CD4-positive, alpha-beta memory T cell (primary cell): ENCODE measurements at regions of chr9 and their contacts with region 1.

Region 1: GRCh38 chr9:5437254-5438216 is at the start of gene PLGRKT:
- DNase-seq: peak; percentile 89 to 95 (median 91)
- H3K4me3 ChIP-seq: peak within 1 kb of the TSS; percentile 71 to 83
- H3K4me3 Mint-ChIP-seq: peak within 1 kb of the TSS; percentile 91 to 98 (median 94)
- H3K27ac ChIP-seq: peak within 1 kb of the TSS; percentile 92
- H3K27ac Mint-ChIP-seq: peak within 1 kb of the TSS; percentile 99 to 100 (median 99)
- H3K4me1 ChIP-seq: peaks cover 23% of the 10 kb centered on the region
- H3K4me1 Mint-ChIP-seq: peaks cover 25 to 46% (median 36%) of the 10 kb centered on the region in 4 donors
- H3K27me3 ChIP-seq: no peaks in the 10 kb centered on the region
- H3K27me3 Mint-ChIP-seq: no peaks in the 10 kb centered on the region
- total RNA-seq, gene PLGRKT: 20.0 to 21.7 TPM

Region 2: DNA sequence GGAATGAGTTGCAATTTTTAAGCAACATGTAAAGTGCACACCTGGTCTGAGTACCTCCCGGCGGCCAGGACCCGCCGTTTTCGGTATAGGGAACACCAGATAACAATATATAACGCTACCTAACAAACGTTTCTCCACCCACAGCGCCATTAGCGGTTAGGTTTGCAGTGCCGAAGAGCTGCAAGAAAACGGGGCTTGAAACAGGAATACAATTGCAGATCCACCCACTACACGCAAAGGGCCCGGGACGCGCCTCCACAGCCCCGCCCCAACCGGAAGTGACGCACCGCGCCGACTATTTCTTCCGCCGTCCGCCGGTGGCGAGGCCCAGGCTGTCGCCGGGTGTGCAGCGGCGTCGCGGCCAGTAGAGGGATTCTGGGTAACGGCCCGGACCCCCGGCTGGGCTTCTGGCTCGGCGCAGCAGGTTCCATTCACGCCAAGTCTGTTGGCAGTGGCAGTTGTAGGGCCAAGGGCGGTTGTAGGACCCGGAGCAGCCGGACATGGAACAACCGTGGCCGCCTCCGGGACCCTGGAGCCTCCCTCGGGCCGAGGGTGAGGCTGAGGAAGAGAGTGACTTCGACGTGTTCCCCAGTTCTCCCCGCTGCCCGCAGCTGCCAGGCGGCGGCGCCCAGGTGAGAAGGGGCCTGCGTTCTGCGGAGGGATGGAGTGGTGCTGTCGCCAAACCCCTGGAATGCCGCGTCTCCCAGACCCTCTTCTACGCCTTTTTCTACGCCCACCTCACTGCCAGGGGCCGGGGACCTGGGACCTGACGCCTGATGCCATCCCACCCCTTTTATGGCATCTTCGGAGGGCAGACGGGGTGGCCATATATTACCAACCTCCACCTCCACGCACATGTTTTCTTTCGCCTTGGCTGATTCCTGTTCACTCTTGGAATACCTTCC is 758.0 kb before region 1 on chr9 and contains the start of gene CDC37L1:
- CTCF ChIA-PET with region 1: no interaction called
- POLR2A ChIA-PET with region 1: interaction called, 4 read pairs
- intact Hi-C with region 1: loop called (anchors 5 kb)
- DNase-seq: peak; percentile 97 to 99 (median 99)
- H3K4me3 ChIP-seq: peak within 1 kb of the TSS; percentile 72 to 80
- H3K4me3 Mint-ChIP-seq: no peak within 1 kb of the TSS
- H3K27ac ChIP-seq: peak within 1 kb of the TSS; percentile 94
- H3K27ac Mint-ChIP-seq: no peak within 1 kb of the TSS
- H3K4me1 ChIP-seq: peaks cover 36% of the 10 kb centered on the region
- H3K4me1 Mint-ChIP-seq: peaks cover 11 to 16% (median 11%) of the 10 kb centered on the region in 4 donors
- H3K27me3 ChIP-seq: no peaks in the 10 kb centered on the region
- H3K27me3 Mint-ChIP-seq: no peaks in the 10 kb centered on the region
- total RNA-seq, gene CDC37L1: 27.2 to 27.8 TPM

Region 3: GRCh38 chr9:4762108-4762885 is 675.2 kb before region 1 on chr9:
- CTCF ChIA-PET with region 1: interaction called, 3 read pairs
- POLR2A ChIA-PET with region 1: no interaction called
- intact Hi-C with region 1: loop called (anchors 2 kb)
- DNase-seq: peak; percentile 75 to 79 (median 77)
- H3K4me3 ChIP-seq: no peak overlapping the region
- H3K4me3 Mint-ChIP-seq: peak overlapping the region in 6 of 8 donors; percentile 17 to 54 (median 42)
- H3K27ac ChIP-seq: no peak overlapping the region
- H3K27ac Mint-ChIP-seq: peak overlapping the region in 2 of 7 donors; percentile 28 to 71
- H3K4me1 ChIP-seq: peaks cover 11% of the 10 kb centered on the region
- H3K4me1 Mint-ChIP-seq: peaks cover 5 to 12% (median 6%) of the 10 kb centered on the region in 4 donors
- H3K27me3 ChIP-seq: peaks cover 4% of the 10 kb centered on the region
- H3K27me3 Mint-ChIP-seq: peaks cover 0 to 4% of the 10 kb centered on the region in 2 donors

Region 4: DNA sequence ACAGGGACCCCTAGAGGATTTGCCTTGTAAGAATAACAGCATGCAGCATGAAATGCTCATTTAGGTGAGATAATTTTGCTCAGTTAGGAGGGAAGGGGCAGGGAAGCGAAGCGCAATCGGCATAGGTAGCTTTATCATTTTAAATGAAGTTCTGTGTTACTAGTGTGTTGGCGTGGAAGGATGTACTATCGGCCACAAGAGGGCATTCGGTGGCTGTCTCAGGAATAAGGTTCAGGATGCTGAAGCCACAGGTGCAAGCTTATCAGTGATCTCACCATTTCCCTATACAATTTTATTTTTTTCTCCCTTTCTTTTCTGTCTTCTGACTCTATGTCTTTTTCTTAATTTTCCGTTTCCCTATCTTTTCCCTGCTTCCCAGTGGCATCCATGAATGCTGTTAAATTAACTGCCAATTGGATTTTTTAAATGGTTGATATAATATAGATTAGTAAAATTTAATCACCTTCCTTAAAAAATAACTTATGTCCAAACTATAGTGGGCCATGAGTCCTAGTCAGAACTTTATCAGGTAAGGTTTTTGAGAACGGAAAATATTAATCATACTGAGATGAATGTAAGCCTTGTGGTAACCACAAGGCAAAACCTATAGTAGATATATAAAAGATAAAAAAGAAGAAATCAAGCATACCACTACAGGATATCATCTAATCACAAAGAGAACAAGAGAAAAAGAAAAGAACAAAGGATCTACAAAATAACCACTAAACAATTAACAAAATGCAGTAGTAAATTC is 250.9 kb before region 1 on chr9:
- CTCF ChIA-PET with region 1: interaction called, 107 read pairs
- POLR2A ChIA-PET with region 1: interaction called, 11 read pairs
- intact Hi-C with region 1: loop called (anchors 5 kb)
- DNase-seq: peak; percentile 67 to 72 (median 71)
- H3K4me3 ChIP-seq: no peak overlapping the region
- H3K4me3 Mint-ChIP-seq: peak overlapping the region in 2 of 8 donors; percentile 3 to 48
- H3K27ac ChIP-seq: no peak overlapping the region
- H3K27ac Mint-ChIP-seq: peak overlapping the region in 5 of 7 donors; percentile 8 to 54 (median 10)
- H3K4me1 ChIP-seq: peaks cover 10% of the 10 kb centered on the region
- H3K4me1 Mint-ChIP-seq: peaks cover 4 to 13% (median 11%) of the 10 kb centered on the region in 4 donors
- H3K27me3 ChIP-seq: no peaks in the 10 kb centered on the region
- H3K27me3 Mint-ChIP-seq: no peaks in the 10 kb centered on the region

Region 5: DNA sequence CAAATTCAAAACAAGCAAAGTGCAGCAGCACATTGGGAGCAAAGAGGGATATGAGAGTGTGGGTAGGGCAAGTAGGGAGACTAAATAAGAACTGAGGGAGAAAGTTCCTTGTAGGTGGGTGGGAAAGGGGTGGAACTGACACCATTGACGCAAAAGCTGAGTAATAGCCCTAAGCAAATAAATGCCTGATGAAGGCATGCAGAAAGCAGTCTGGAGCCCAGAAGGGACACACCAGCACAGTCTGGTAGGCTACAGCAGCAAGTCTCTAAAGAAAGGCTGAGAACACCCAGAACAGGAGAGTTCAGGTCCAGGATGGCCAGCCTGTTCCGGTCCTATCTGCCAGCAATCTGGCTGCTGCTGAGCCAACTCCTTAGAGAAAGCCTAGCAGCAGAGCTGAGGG is 206.3 kb before region 1 on chr9 and contains the start of gene INSL4:
- CTCF ChIA-PET with region 1: no interaction called
- POLR2A ChIA-PET with region 1: no interaction called
- intact Hi-C with region 1: no loop called
- DNase-seq: no peak
- H3K4me3 ChIP-seq: no peak within 1 kb of the TSS
- H3K4me3 Mint-ChIP-seq: no peak within 1 kb of the TSS
- H3K27ac ChIP-seq: no peak within 1 kb of the TSS
- H3K27ac Mint-ChIP-seq: no peak within 1 kb of the TSS
- H3K4me1 ChIP-seq: no peaks in the 10 kb centered on the region
- H3K4me1 Mint-ChIP-seq: no peaks in the 10 kb centered on the region
- H3K27me3 ChIP-seq: no peaks in the 10 kb centered on the region
- H3K27me3 Mint-ChIP-seq: peaks cover 4 to 9% of the 10 kb centered on the region in 2 donors
- total RNA-seq, gene INSL4: not detected

Region 6: GRCh38 chr9:5268890-5269715 is 168.4 kb before region 1 on chr9:
- CTCF ChIA-PET with region 1: no interaction called
- POLR2A ChIA-PET with region 1: no interaction called
- intact Hi-C with region 1: no loop called
- DNase-seq: no peak
- H3K4me3 ChIP-seq: no peak overlapping the region
- H3K4me3 Mint-ChIP-seq: no peak overlapping the region
- H3K27ac ChIP-seq: no peak overlapping the region
- H3K27ac Mint-ChIP-seq: no peak overlapping the region
- H3K4me1 ChIP-seq: no peaks in the 10 kb centered on the region
- H3K4me1 Mint-ChIP-seq: peaks cover 7 to 9% (median 9%) of the 10 kb centered on the region in 4 donors
- H3K27me3 ChIP-seq: no peaks in the 10 kb centered on the region
- H3K27me3 Mint-ChIP-seq: peaks cover 2% of the 10 kb centered on the region in 2 donors

Region 7: DNA sequence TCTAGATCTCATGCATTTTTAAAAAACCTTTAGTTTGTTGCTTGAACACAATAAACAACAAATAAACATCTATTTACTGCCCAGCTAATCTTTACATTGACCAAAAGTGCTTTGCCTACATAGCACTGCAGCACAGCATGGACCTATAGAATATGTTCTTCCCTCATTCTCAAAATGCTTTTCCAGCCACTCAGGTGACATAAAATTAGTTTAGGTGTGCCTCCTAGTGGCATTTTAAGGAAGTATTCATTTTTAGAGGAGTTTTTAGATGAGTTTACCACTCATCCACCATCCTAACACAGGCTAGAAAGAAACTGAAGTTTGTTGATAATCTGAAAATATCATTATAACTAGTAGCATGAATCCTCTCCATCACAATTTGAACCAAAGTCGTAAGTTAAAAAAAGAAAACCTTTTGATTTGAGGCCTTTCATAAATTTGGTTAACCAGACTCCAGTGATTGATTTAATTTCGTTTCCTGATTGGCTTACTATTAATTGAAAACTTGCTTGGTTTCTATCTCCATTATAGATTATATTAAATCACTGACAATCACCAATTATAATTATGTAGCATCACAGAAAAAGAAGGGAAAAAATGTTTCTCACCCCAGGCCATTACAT is 12.4 kb before region 1 on chr9:
- CTCF ChIA-PET with region 1: interaction called, 10 read pairs
- POLR2A ChIA-PET with region 1: interaction called, 3 read pairs
- intact Hi-C with region 1: loop called (anchors 1 kb)
- DNase-seq: peak in 4 of 5 donors; percentile 48 to 53 (median 50)
- H3K4me3 ChIP-seq: no peak overlapping the region
- H3K4me3 Mint-ChIP-seq: no peak overlapping the region
- H3K27ac ChIP-seq: no peak overlapping the region
- H3K27ac Mint-ChIP-seq: peak overlapping the region in 1 of 7 donors; percentile 56
- H3K4me1 ChIP-seq: no peaks in the 10 kb centered on the region
- H3K4me1 Mint-ChIP-seq: peaks cover 3 to 12% (median 6%) of the 10 kb centered on the region in 4 donors
- H3K27me3 ChIP-seq: no peaks in the 10 kb centered on the region
- H3K27me3 Mint-ChIP-seq: no peaks in the 10 kb centered on the region

Region 8: GRCh38 chr9:5566054-5566618 is 128.6 kb after region 1 on chr9:
- CTCF ChIA-PET with region 1: no interaction called
- POLR2A ChIA-PET with region 1: no interaction called
- intact Hi-C with region 1: no loop called
- DNase-seq: no peak
- H3K4me3 ChIP-seq: no peak overlapping the region
- H3K4me3 Mint-ChIP-seq: no peak overlapping the region
- H3K27ac ChIP-seq: no peak overlapping the region
- H3K27ac Mint-ChIP-seq: peak overlapping the region in 1 of 7 donors; percentile 7
- H3K4me1 ChIP-seq: peaks cover 28% of the 10 kb centered on the region
- H3K4me1 Mint-ChIP-seq: peaks cover 30 to 47% (median 35%) of the 10 kb centered on the region in 4 donors
- H3K27me3 ChIP-seq: no peaks in the 10 kb centered on the region
- H3K27me3 Mint-ChIP-seq: no peaks in the 10 kb centered on the region

Region 9: DNA sequence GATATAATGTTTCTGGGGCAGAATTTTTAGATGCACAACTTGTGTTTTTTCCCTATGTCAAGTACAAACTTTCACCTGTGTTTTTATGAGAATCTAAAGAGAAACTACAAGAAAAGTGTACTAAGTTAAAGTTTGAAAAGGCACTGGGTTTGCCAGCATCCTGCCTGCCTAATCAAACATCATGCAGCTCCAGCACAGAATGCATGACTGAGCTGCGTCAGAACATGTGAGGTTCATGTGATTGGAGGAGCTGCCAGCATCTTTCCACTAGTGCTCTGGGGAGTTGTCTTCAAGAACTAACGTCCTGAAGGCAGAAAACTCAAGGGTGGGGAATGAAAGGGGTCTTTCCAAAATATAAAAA is 145.3 kb after region 1 on chr9:
- CTCF ChIA-PET with region 1: interaction called, 40 read pairs
- POLR2A ChIA-PET with region 1: interaction called, 33 read pairs
- intact Hi-C with region 1: no loop called
- DNase-seq: peak in 4 of 5 donors; percentile 42 to 63 (median 52)
- H3K4me3 ChIP-seq: no peak overlapping the region
- H3K4me3 Mint-ChIP-seq: peak overlapping the region in 3 of 8 donors; percentile 7 to 48 (median 13)
- H3K27ac ChIP-seq: no peak overlapping the region
- H3K27ac Mint-ChIP-seq: peak overlapping the region; percentile 49 to 92 (median 88)
- H3K4me1 ChIP-seq: peaks cover 35% of the 10 kb centered on the region
- H3K4me1 Mint-ChIP-seq: peaks cover 43 to 64% (median 44%) of the 10 kb centered on the region in 4 donors
- H3K27me3 ChIP-seq: no peaks in the 10 kb centered on the region
- H3K27me3 Mint-ChIP-seq: no peaks in the 10 kb centered on the region

Region 10: GRCh38 chr9:6008169-6008979 is 570.8 kb after region 1 on chr9:
- CTCF ChIA-PET with region 1: no interaction called
- POLR2A ChIA-PET with region 1: interaction called, 3 read pairs
- intact Hi-C with region 1: loop called (anchors 5 kb)
- DNase-seq: peak; percentile 90 to 99 (median 95)
- H3K4me3 ChIP-seq: peak overlapping the region in 1 of 2 donors; percentile 82
- H3K4me3 Mint-ChIP-seq: peak overlapping the region; percentile 69 to 93 (median 82)
- H3K27ac ChIP-seq: peak overlapping the region; percentile 83
- H3K27ac Mint-ChIP-seq: peak overlapping the region; percentile 91 to 96 (median 94)
- H3K4me1 ChIP-seq: peaks cover 45% of the 10 kb centered on the region
- H3K4me1 Mint-ChIP-seq: peaks cover 28 to 76% (median 45%) of the 10 kb centered on the region in 4 donors
- H3K27me3 ChIP-seq: no peaks in the 10 kb centered on the region
- H3K27me3 Mint-ChIP-seq: no peaks in the 10 kb centered on the region

Region 11: GRCh38 chr9:6034954-6035353 is 597.4 kb after region 1 on chr9:
- CTCF ChIA-PET with region 1: no interaction called
- POLR2A ChIA-PET with region 1: no interaction called
- intact Hi-C with region 1: no loop called
- DNase-seq: no peak
- H3K4me3 ChIP-seq: no peak overlapping the region
- H3K4me3 Mint-ChIP-seq: no peak overlapping the region
- H3K27ac ChIP-seq: no peak overlapping the region
- H3K27ac Mint-ChIP-seq: no peak overlapping the region
- H3K4me1 ChIP-seq: no peaks in the 10 kb centered on the region
- H3K4me1 Mint-ChIP-seq: no peaks in the 10 kb centered on the region
- H3K27me3 ChIP-seq: no peaks in the 10 kb centered on the region
- H3K27me3 Mint-ChIP-seq: peaks cover 3 to 8% of the 10 kb centered on the region in 2 donors